ENCODE measurements at regions of chr2 and their contacts with region 1.

Region 1: DNA sequence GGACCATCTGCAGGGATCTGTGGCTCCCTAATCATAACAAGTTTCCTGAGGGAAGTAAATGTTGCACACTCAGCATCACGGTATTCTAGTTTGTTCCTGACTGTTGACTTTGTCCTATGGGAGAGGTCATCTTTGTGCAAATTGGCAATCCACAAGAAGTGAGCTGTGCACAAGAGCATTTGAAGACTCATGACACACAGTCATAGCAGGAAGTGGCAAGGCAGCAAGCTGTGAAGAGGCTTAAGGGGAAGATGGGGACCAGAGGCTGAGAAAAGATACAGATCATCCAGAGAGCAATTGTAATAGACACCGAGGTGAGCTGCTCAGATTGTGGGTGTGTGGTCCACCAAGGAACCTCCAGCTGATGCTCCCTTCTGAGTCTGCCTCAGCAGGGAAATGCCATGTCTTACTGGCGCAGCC is 2.7 kb downstream of the TNP1 start:
- DNase-seq: peak; percentile 22
- H3K4me3 Mint-ChIP-seq: no peak overlapping the region
- H3K27ac Mint-ChIP-seq: peak overlapping the region; percentile 34
- H3K4me1 Mint-ChIP-seq: peaks cover 52% of the 10 kb centered on the region
- H3K27me3 Mint-ChIP-seq: no peaks in the 10 kb centered on the region

Region 2: DNA sequence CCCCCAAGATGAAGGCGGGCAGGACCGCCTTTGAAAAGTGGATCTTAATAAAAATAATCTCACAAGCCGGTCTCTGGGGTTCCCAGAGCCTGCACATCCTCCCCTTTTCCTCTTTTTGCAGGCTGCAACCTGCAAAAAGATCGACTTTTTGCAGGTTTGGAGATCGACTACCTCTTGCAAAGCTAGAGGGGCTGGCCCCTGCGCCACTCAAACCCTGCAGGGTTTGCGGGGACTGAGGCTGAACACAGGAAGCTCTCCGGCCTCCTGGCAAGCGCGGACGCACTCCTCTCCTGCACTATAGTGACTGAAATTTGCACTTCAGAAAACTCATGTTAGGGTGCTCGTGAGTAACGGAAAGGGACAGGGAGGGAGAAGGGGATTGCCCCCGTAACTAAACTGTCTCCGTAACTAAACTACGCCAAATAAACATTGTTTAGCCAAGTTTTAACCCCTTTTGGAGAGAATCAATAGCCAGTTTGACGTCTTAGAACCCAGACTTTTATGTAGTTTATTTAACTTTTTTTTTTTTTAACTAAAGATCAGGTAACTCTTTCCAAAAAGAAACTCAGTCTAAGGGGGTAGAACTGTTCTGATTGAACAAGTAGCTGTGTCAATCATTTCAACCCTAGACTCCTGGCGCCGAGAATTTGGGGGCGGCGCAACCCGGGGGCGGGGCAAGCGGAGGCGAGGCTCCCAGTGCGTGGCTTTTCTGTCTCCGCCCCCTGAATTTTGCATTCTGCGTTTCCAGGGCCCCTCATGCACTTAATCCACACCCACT is 164.3 kb before region 1 on chr2:
- intact Hi-C with region 1: loop called (anchors 5 kb)
- DNase-seq: peak; percentile 60
- H3K4me3 Mint-ChIP-seq: peak overlapping the region; percentile 86
- H3K27ac Mint-ChIP-seq: peak overlapping the region; percentile 81
- H3K4me1 Mint-ChIP-seq: peaks cover 27% of the 10 kb centered on the region
- H3K27me3 Mint-ChIP-seq: peaks cover 71% of the 10 kb centered on the region

Region 3: DNA sequence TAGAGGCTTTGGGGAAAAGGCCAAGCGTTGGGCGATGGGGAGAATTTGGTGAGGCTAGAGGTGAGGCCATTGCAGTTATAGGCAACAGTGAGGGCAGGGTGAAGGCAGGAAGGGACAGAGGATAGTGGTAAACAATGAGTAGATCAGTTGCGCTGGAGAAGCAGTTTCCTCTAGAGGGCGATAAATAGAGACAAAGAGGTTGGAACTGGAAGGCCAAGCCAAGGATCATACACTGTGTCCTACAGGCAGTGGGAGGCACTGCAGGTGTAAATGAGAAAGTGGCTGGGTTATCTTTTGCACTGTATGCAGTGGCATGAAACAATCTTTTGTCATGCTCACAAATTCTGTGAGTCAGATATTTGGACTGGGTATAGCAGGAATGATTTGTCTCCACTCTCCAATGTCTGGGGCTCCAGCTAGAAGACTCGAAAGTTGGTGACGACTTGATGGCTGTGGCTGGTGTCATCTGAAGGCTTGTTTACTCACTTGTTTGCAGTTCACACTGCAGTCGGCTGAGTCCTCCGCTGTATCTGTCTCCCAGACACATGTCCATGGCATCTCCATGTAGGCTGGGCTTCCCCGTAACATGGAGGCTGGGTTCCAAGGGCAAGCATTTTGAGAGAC is 79.4 kb before region 1 on chr2:
- intact Hi-C with region 1: loop called (anchors 5 kb)
- DNase-seq: peak; percentile 36
- H3K4me3 Mint-ChIP-seq: no peak overlapping the region
- H3K27ac Mint-ChIP-seq: no peak overlapping the region
- H3K4me1 Mint-ChIP-seq: peaks cover 4% of the 10 kb centered on the region
- H3K27me3 Mint-ChIP-seq: peaks cover 13% of the 10 kb centered on the region

Region 4: GRCh38 chr2:216880509-216881184 is 23.5 kb after region 1 on chr2:
- intact Hi-C with region 1: loop called (anchors 1 kb)
- DNase-seq: peak; percentile 23
- H3K4me3 Mint-ChIP-seq: peak overlapping the region; percentile 63
- H3K27ac Mint-ChIP-seq: peak overlapping the region; percentile 86
- H3K4me1 Mint-ChIP-seq: peaks cover 32% of the 10 kb centered on the region
- H3K27me3 Mint-ChIP-seq: no peaks in the 10 kb centered on the region

Region 5: DNA sequence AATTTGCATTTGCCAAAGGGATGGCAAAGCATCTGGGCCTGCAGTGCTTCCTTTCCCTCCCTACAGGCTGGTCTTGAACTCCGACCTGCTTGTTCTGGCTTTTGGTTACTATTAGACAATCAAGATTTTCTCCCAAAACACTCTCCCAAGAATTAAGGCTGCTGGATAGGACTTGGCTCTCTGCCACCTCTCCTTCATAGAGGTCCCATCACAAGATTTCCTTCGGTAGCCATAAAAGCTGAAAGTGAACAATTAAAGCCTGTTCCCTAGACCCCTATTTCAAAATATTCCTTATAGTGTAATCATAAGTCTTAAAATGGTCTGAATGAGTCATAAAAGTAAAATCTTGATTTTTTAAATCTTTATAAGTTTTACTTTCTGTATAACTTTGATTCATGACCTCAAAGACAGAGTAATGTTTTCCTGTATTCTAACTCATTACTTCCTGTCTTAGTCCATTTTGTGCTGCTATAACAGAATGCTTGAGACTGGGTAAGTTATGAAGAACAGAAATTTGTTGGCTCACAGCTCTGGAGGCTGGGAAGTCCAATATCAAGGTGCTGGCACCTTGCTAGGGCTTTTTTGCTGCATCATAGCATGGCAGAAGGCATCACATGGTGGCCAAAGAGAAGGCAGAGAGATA is 40.5 kb after region 1 on chr2:
- intact Hi-C with region 1: loop called (anchors 2 kb)
- DNase-seq: no peak
- H3K4me3 Mint-ChIP-seq: no peak overlapping the region
- H3K27ac Mint-ChIP-seq: no peak overlapping the region
- H3K4me1 Mint-ChIP-seq: peaks cover 12% of the 10 kb centered on the region
- H3K27me3 Mint-ChIP-seq: no peaks in the 10 kb centered on the region

Region 6: DNA sequence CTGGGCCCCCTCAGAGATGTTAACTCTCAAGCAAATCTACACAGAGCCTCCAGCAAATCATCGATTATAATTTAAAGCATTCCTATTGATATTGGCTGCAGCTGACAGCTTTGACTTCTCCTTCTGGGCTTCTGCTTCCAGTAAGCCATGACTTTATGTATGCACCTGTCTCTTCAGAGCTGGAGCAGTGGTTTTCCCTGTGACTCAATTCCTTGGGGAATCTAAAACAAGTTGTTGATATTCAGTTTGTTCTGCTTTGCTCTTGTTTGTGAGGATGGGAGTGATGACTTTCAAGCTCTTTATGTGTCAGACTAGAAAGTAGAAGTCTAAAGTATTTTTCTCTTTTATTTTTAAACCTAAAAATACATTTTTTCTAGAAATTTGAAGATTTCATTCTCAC is 47.8 kb after region 1 on chr2:
- intact Hi-C with region 1: loop called (anchors 1 kb)
- DNase-seq: no peak
- H3K4me3 Mint-ChIP-seq: no peak overlapping the region
- H3K27ac Mint-ChIP-seq: no peak overlapping the region
- H3K4me1 Mint-ChIP-seq: peaks cover 15% of the 10 kb centered on the region
- H3K27me3 Mint-ChIP-seq: peaks cover 1% of the 10 kb centered on the region

Region 7: GRCh38 chr2:217090024-217090473 is 232.9 kb after region 1 on chr2:
- intact Hi-C with region 1: loop called (anchors 1 kb)
- DNase-seq: no peak
- H3K4me3 Mint-ChIP-seq: peak overlapping the region; percentile 45
- H3K27ac Mint-ChIP-seq: peak overlapping the region; percentile 72
- H3K4me1 Mint-ChIP-seq: peaks cover 50% of the 10 kb centered on the region
- H3K27me3 Mint-ChIP-seq: no peaks in the 10 kb centered on the region

Measured in activated T-helper 1 cell treated with anti-CD3 and anti-CD28 coated beads, Interleukin-12 subunit alpha, Interleukin-12 subunit beta, Interleukin-2, Interleukin-4 antibody, amounts not matched to agents 30 ng/mL and 10 ng/mL and 1 ng/mL, durations not matched to agents 14 hours and 24 hours and 36 hours (primary cell).